ENCODE measurements at regions of chr18 and their contacts with region 1.

Region 1: GRCh38 chr18:63367053-63367953 is at the start of gene KDSR:
- DNase-seq: peak; percentile 96 to 98 (median 97)
- ATAC-seq: peak; percentile 97 to 99 (median 98)
- H3K4me3 ChIP-seq: peak within 1 kb of the TSS; percentile 77 to 98 (median 92)
- H3K27ac ChIP-seq: peak within 1 kb of the TSS; percentile 88 to 100 (median 98)
- H3K4me1 ChIP-seq: peaks cover 0 to 30% (median 16%) of the 10 kb centered on the region in 12 donors
- H3K27me3 ChIP-seq: no peaks in the 10 kb centered on the region
- CTCF ChIP-seq: peak in 2 of 12 donors; percentile 15
- POLR2A ChIP-seq: peak in 1 of 2 donors; percentile 77
- total RNA-seq, gene KDSR: 26.3 to 45.6 (median 41.4) TPM

Region 2: DNA sequence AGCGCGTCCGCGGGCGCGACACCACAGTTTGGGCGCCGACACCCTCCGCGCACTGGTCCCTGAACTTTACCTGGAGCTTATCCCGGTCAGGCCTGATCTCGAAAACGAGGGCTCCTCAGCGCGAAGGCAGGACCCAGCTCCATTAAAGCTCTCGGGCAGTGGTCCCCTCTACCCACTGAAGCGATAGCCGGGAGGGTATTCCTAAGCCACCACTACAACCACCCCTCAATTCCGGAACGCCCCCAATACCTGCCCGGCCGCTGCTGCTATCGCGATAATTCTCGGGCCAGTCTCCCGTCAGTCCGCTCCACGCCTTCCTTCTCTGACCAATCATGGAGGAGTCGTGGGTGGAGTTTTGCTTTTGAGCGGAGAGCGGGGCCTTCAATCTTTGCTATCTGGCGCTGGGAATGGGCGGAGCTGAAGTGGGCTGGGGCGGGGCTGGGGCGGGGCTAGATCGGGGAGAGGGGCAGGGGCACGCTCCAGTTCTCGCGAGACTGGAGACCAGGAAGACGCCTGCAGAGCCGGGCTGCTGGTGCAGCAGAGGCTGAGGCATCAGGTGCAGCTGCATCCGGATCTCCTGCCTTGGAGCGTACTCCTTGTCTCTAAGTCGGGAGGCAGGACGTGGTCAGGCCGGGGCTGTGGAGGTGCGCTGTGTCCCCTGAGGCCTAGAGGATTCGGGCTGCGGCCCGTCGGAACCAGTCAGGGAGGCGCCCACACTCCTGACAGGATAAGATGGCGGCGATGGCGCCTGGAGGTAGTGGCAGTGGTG is 1180.3 kb before region 1 on chr18 and contains the starts of genes PIGN and RELCH:
- intact Hi-C with region 1: loop called in 1 of 10 experiments (anchors 5 kb)
- DNase-seq: peak; percentile 93 to 97 (median 96)
- ATAC-seq: peak; percentile 99 to 100 (median 99)
- H3K4me3 ChIP-seq: peak within 1 kb of the TSS; percentile 66 to 100 (median 90)
- H3K27ac ChIP-seq: peak within 1 kb of the TSS; percentile 37 to 87 (median 81)
- H3K4me1 ChIP-seq: peaks cover 0 to 51% (median 35%) of the 10 kb centered on the region in 12 donors
- H3K27me3 ChIP-seq: no peaks in the 10 kb centered on the region
- CTCF ChIP-seq: no peak
- POLR2A ChIP-seq: peak in 1 of 2 donors; percentile 74
- total RNA-seq, gene PIGN: 16.6 to 29.6 (median 23.3) TPM
- total RNA-seq, gene RELCH: 11.6 to 24.8 (median 15.2) TPM

Region 3: GRCh38 chr18:63402246-63403162 is 35.2 kb after region 1 on chr18:
- intact Hi-C with region 1: loop called in 1 of 10 experiments (anchors 5 kb)
- DNase-seq: peak in 4 of 5 donors; percentile 34 to 60 (median 38)
- ATAC-seq: peak; percentile 58 to 89 (median 78)
- H3K4me3 ChIP-seq: no peak overlapping the region
- H3K27ac ChIP-seq: peak overlapping the region in 8 of 12 donors; percentile 37 to 80 (median 64)
- H3K4me1 ChIP-seq: peaks cover 0 to 25% (median 2%) of the 10 kb centered on the region in 12 donors
- H3K27me3 ChIP-seq: no peaks in the 10 kb centered on the region
- CTCF ChIP-seq: no peak
- POLR2A ChIP-seq: no peak

Measured in heart left ventricle (tissue), 16 donors.